Heart right ventricle (tissue), 16 donors: ENCODE measurements at regions of chr7 and their contacts with region 1.

Region 1: GRCh38 chr7:134845468-134845867 is 66.0 kb downstream of the CALD1 start:
- DNase-seq: no peak
- ATAC-seq: no peak
- H3K4me3 ChIP-seq: no peak overlapping the region
- H3K27ac ChIP-seq: peak overlapping the region in 1 of 10 donors; percentile 27
- H3K4me1 ChIP-seq: peaks cover 8 to 87% (median 58%) of the 10 kb centered on the region in 9 donors
- H3K27me3 ChIP-seq: no peaks in the 10 kb centered on the region
- CTCF ChIP-seq: peak in 6 of 9 donors; percentile 10 to 38 (median 15)

Region 2: GRCh38 chr7:134798155-134798554 is 47.3 kb before region 1 on chr7:
- intact Hi-C with region 1: no loop called
- DNase-seq: no peak
- ATAC-seq: no peak
- H3K4me3 ChIP-seq: no peak overlapping the region
- H3K27ac ChIP-seq: peak overlapping the region in 4 of 10 donors; percentile 5 to 49 (median 24)
- H3K4me1 ChIP-seq: peaks cover 0 to 70% (median 39%) of the 10 kb centered on the region in 9 donors
- H3K27me3 ChIP-seq: no peaks in the 10 kb centered on the region
- CTCF ChIP-seq: no peak

Region 3: GRCh38 chr7:134879815-134880475 is 34.5 kb after region 1 on chr7:
- intact Hi-C with region 1: loop called in 1 of 10 experiments (anchors 5 kb)
- DNase-seq: no peak
- ATAC-seq: peak in 2 of 8 donors; percentile 31 to 55
- H3K4me3 ChIP-seq: no peak overlapping the region
- H3K27ac ChIP-seq: peak overlapping the region in 4 of 10 donors; percentile 1 to 56 (median 22)
- H3K4me1 ChIP-seq: peaks cover 0 to 54% (median 21%) of the 10 kb centered on the region in 9 donors
- H3K27me3 ChIP-seq: no peaks in the 10 kb centered on the region
- CTCF ChIP-seq: no peak

Region 4: GRCh38 chr7:134954197-134955082 is 109.0 kb after region 1 on chr7:
- intact Hi-C with region 1: no loop called
- DNase-seq: no peak
- ATAC-seq: peak in 4 of 8 donors; percentile 23 to 55 (median 36)
- H3K4me3 ChIP-seq: no peak overlapping the region
- H3K27ac ChIP-seq: peak overlapping the region in 1 of 10 donors; percentile 16
- H3K4me1 ChIP-seq: no peaks in the 10 kb centered on the region
- H3K27me3 ChIP-seq: no peaks in the 10 kb centered on the region
- CTCF ChIP-seq: peak; percentile 25 to 72 (median 59)